Sigmoid colon (tissue), 7 donors: ENCODE measurements at regions of chr1 and their contacts with region 1.

Region 1: GRCh38 chr1:192887426-192887825 is 78.6 kb downstream of the RGS2 start:
- DNase-seq: no peak
- H3K4me3 ChIP-seq: no peak overlapping the region
- H3K27ac ChIP-seq: no peak overlapping the region
- H3K4me1 ChIP-seq: peaks cover 0 to 24% (median 21%) of the 10 kb centered on the region in 4 donors
- H3K27me3 ChIP-seq: no peaks in the 10 kb centered on the region
- CTCF ChIP-seq: no peak
- EP300 ChIP-seq: no peak
- POLR2A ChIP-seq: no peak

Region 2: GRCh38 chr1:192817246-192817645 is 70.2 kb before region 1 on chr1:
- intact Hi-C with region 1: loop called (anchors 5 kb)
- DNase-seq: no peak
- H3K4me3 ChIP-seq: peak overlapping the region in 1 of 4 donors; percentile 13
- H3K27ac ChIP-seq: peak overlapping the region; percentile 57 to 98 (median 80)
- H3K4me1 ChIP-seq: peaks cover 0 to 36% (median 24%) of the 10 kb centered on the region in 4 donors
- H3K27me3 ChIP-seq: no peaks in the 10 kb centered on the region
- CTCF ChIP-seq: no peak
- EP300 ChIP-seq: peak in 2 of 4 donors; percentile 15 to 53
- POLR2A ChIP-seq: no peak

Region 3: GRCh38 chr1:192941722-192942411 is 54.4 kb after region 1 on chr1:
- intact Hi-C with region 1: no loop called
- DNase-seq: no peak
- H3K4me3 ChIP-seq: no peak overlapping the region
- H3K27ac ChIP-seq: peak overlapping the region in 2 of 4 donors; percentile 38 to 52
- H3K4me1 ChIP-seq: peaks cover 0 to 14% (median 0%) of the 10 kb centered on the region in 4 donors
- H3K27me3 ChIP-seq: no peaks in the 10 kb centered on the region
- CTCF ChIP-seq: no peak
- EP300 ChIP-seq: no peak
- POLR2A ChIP-seq: no peak

Region 4: GRCh38 chr1:192951691-192952460 is 64.5 kb after region 1 on chr1:
- intact Hi-C with region 1: loop called (anchors 5 kb)
- DNase-seq: peak; percentile 74
- H3K4me3 ChIP-seq: no peak overlapping the region
- H3K27ac ChIP-seq: peak overlapping the region in 3 of 4 donors; percentile 50 to 70 (median 54)
- H3K4me1 ChIP-seq: peaks cover 0 to 24% (median 20%) of the 10 kb centered on the region in 4 donors
- H3K27me3 ChIP-seq: no peaks in the 10 kb centered on the region
- CTCF ChIP-seq: no peak
- EP300 ChIP-seq: peak in 1 of 4 donors; percentile 41
- POLR2A ChIP-seq: no peak